Ovary (tissue), 10 donors: ENCODE measurements at regions of chr1 and their contacts with region 1.

Region 1: GRCh38 chr1:174531751-174532150 is 84.0 kb downstream of the GPR52 start:
- DNase-seq: no peak
- H3K4me3 ChIP-seq: no peak overlapping the region
- H3K27ac ChIP-seq: no peak overlapping the region
- H3K4me1 ChIP-seq: no peaks in the 10 kb centered on the region
- H3K27me3 ChIP-seq: no peaks in the 10 kb centered on the region
- CTCF ChIP-seq: no peak
- EP300 ChIP-seq: no peak
- POLR2A ChIP-seq: no peak

Region 2: GRCh38 chr1:174491606-174492005 is 40.1 kb before region 1 on chr1:
- intact Hi-C with region 1: loop called in 1 of 4 experiments (anchors 2 kb)
- DNase-seq: no peak
- H3K4me3 ChIP-seq: no peak overlapping the region
- H3K27ac ChIP-seq: no peak overlapping the region
- H3K4me1 ChIP-seq: no peaks in the 10 kb centered on the region
- H3K27me3 ChIP-seq: no peaks in the 10 kb centered on the region
- CTCF ChIP-seq: no peak
- EP300 ChIP-seq: no peak
- POLR2A ChIP-seq: no peak

Region 3: GRCh38 chr1:174789399-174789798 is 257.6 kb after region 1 on chr1:
- intact Hi-C with region 1: no loop called
- DNase-seq: no peak
- H3K4me3 ChIP-seq: no peak overlapping the region
- H3K27ac ChIP-seq: no peak overlapping the region
- H3K4me1 ChIP-seq: no peaks in the 10 kb centered on the region
- H3K27me3 ChIP-seq: no peaks in the 10 kb centered on the region
- CTCF ChIP-seq: no peak
- EP300 ChIP-seq: no peak
- POLR2A ChIP-seq: no peak

Region 4: GRCh38 chr1:174872615-174873058 is 340.9 kb after region 1 on chr1:
- intact Hi-C with region 1: no loop called
- DNase-seq: no peak
- H3K4me3 ChIP-seq: no peak overlapping the region
- H3K27ac ChIP-seq: no peak overlapping the region
- H3K4me1 ChIP-seq: peaks cover 3% of the 10 kb centered on the region
- H3K27me3 ChIP-seq: no peaks in the 10 kb centered on the region
- CTCF ChIP-seq: no peak
- EP300 ChIP-seq: no peak
- POLR2A ChIP-seq: no peak